ENCODE measurements at regions of chr6 and their contacts with region 1.

Region 1: DNA sequence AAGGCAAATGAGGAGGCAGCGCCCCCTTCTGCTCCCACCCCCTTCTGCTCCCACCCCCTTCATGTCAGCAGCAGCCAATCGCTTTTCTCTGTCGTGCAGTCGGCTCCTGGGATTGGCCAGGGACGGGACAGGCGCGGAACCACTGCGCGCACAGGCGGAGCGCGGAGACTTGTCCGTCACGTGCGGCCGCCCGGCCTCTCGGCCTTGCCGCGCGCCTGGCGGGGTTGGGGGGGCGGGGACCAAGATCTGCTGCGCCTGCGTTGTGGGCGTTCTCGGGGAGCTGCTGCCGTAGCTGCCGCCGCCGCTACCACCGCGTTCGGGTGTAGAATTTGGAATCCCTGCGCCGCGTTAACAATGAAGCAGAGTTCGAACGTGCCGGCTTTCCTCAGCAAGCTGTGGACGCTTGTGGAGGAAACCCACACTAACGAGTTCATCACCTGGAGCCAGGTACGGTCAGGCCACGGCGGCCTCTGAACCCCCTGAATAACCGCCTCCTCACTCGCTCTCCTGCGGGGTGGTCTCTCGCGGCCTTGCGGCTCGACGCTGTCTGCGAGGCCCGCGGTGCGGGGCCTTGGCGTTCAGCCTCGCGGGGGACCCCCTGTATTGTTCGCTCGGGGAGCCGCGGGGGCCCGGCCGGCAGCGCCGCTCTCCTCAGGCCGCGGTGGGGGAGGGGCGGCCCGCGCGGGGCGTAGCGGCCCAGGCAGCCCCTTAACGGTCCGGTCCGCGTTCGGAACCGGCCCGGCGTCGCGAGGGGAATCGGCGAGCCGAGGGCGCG is at the start of gene HSF2:
- DNase-seq: peak; percentile 93 to 98
- ATAC-seq: peak; percentile 99
- total RNA-seq, gene HSF2: 4.0 to 5.8 TPM

Region 2: DNA sequence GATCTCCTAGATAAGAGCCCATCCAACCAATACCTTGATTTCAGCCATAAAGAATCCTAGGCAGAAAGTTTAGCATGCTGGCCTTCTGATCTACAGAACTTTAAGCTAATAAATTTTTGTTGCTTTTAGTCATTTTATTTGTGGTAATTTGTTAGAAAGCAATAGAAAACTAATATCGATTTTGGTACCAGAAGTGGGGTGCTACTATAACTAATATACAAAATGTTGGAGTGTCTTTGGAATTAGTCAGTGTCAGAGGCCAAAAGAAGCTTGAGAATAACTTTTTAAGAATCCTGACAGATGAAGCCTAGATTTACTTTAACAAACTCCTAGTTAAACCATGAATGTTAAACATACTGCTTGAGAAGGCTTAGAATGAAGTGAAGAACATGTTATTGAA is 83.7 kb before region 1 on chr6:
- intact Hi-C with region 1: no loop called
- DNase-seq: no peak
- ATAC-seq: no peak

Region 3: GRCh38 chr6:122471107-122472021 is 71.8 kb after region 1 on chr6 and contains the start of gene SERINC1:
- intact Hi-C with region 1: loop called in 1 of 2 experiments (anchors 5 kb)
- DNase-seq: peak; percentile 95 to 97
- ATAC-seq: peak; percentile 99
- total RNA-seq, gene SERINC1: 90.9 to 144 TPM